ENCODE measurements at regions of chr13 and their contacts with region 1.

Region 1: DNA sequence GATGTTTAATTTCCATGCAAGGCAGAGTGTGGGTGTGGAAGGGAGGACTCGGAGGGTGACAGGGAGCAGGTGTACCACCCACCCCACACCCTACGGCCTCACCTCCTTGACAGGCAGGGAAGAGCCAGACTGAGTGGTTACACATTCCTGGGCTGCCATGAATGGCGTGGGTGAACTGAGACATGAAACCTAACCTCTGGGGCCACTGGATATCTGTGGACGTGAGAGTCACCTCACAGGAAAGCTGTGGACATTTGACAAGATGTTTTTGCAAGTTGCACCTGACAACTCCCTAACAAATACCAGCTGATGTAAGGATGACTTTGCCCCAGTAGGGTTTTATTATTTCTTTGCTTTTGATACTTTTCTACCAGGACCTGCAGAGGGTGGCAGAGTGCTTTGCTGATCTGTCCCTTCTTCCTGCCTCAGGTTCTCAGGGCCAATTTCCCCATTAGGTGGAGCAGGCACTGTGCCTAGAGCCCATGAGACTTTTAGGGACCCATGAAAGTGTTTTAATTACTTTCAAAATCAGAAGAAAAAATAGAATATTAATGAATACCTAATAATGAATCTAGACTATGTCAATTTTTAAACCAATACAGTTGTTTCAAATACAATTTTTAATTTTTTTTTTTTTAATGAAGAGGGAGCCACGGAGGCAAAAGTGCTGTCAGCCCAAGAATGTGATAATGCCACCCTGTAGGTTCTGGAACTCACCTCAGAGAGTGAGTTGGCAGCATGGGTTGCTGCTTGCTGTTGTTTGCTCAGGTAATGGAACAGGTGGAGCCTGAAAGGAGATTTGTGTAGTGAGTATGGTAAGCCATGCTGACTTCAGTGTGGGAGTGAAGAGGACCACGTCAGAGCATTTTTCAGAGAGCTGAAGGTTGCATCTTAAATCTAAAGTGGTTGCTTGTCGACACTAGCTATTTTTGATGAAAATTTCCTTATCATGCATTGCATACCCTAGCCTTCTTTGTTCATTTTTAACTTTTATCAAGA is 58.0 kb upstream of the CYSLTR2 start:
- DNase-seq: peak; percentile 52
- H3K27ac ChIP-seq: no peak overlapping the region
- CTCF ChIP-seq: peak; percentile 64

Region 2: DNA sequence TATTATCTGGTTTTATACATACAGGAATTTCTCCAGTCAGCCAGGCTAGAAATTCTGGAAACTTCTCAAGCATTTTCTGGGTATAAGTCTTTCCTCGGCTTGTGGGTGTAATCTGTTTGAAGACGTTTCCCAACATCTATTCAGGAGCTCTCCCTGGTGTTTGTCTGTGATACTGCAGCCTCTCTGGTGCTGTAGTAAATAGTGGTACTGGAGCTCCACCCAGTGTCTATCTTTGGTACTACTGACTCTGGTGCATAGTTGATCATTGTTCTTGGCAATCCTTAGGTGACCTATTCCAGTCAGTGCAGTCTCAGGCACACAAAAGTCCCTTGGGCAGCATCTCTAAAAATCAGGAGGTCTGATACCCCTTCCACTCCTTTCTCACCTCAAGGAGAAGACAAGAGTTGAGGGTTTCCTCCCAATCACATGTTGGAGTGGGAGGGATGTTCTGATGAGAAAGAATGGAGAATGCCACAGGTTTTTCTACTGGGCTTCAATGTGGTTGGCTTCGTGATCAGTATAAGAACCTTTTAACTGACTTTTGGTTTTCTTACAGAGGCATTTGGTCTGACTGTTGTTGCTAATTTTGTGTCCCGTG is 173.5 kb after region 1 on chr13:
- CTCF ChIA-PET with region 1: interaction called, 42 read pairs
- POLR2A ChIA-PET with region 1: no interaction called
- DNase-seq: peak; percentile 73
- H3K27ac ChIP-seq: no peak overlapping the region
- CTCF ChIP-seq: peak; percentile 96

Measured in RWPE1 (cell line).